PC-3 (cell line): ENCODE measurements at regions of chr3 and their contacts with region 1.

Region 1: GRCh38 chr3:80190051-80190450 is 422.3 kb upstream of the ROBO1 start:
- DNase-seq: peak; percentile 99
- ATAC-seq: peak; percentile 67
- H3K4me3 ChIP-seq: peak overlapping the region; percentile 28; the same call in 1 of the 2 replicates
- H3K27ac ChIP-seq: peak overlapping the region; percentile 75
- H3K4me1 ChIP-seq: peaks cover 59% of the 10 kb centered on the region
- H3K27me3 ChIP-seq: no peaks in the 10 kb centered on the region
- CTCF ChIP-seq: no peak

Region 2: GRCh38 chr3:79521238-79521848 is 668.7 kb before region 1 on chr3:
- CTCF ChIA-PET with region 1: no interaction called
- POLR2A ChIA-PET with region 1: no interaction called
- intact Hi-C with region 1: loop called (anchors 5 kb)
- DNase-seq: peak; percentile 84
- ATAC-seq: peak; percentile 72
- H3K4me3 ChIP-seq: peak overlapping the region; percentile 33; the same call in 1 of the 2 replicates
- H3K27ac ChIP-seq: no peak overlapping the region
- H3K4me1 ChIP-seq: no peaks in the 10 kb centered on the region; the same call in 1 of the 2 replicates
- H3K27me3 ChIP-seq: no peaks in the 10 kb centered on the region
- CTCF ChIP-seq: peak; percentile 83

Region 3: GRCh38 chr3:79810581-79810980 is 379.5 kb before region 1 on chr3:
- CTCF ChIA-PET with region 1: no interaction called
- POLR2A ChIA-PET with region 1: no interaction called
- intact Hi-C with region 1: loop called (anchors 5 kb)
- DNase-seq: peak; percentile 70
- ATAC-seq: peak; percentile 80
- H3K4me3 ChIP-seq: no peak overlapping the region
- H3K27ac ChIP-seq: 0 out of 2 replicates have a peak overlapping the region, but pooled peaks have one; percentile 3
- H3K4me1 ChIP-seq: peaks cover 27% of the 10 kb centered on the region
- H3K27me3 ChIP-seq: no peaks in the 10 kb centered on the region
- CTCF ChIP-seq: no peak

Region 4: GRCh38 chr3:79986338-79986737 is 203.7 kb before region 1 on chr3:
- CTCF ChIA-PET with region 1: no interaction called
- POLR2A ChIA-PET with region 1: interaction called, 3 read pairs
- intact Hi-C with region 1: loop called (anchors 5 kb)
- DNase-seq: no peak
- ATAC-seq: peak; percentile 65; the same call in 1 of the 2 replicates
- H3K4me3 ChIP-seq: no peak overlapping the region
- H3K27ac ChIP-seq: peak overlapping the region; percentile 93
- H3K4me1 ChIP-seq: peaks cover 23% of the 10 kb centered on the region
- H3K27me3 ChIP-seq: no peaks in the 10 kb centered on the region
- CTCF ChIP-seq: no peak

Region 5: DNA sequence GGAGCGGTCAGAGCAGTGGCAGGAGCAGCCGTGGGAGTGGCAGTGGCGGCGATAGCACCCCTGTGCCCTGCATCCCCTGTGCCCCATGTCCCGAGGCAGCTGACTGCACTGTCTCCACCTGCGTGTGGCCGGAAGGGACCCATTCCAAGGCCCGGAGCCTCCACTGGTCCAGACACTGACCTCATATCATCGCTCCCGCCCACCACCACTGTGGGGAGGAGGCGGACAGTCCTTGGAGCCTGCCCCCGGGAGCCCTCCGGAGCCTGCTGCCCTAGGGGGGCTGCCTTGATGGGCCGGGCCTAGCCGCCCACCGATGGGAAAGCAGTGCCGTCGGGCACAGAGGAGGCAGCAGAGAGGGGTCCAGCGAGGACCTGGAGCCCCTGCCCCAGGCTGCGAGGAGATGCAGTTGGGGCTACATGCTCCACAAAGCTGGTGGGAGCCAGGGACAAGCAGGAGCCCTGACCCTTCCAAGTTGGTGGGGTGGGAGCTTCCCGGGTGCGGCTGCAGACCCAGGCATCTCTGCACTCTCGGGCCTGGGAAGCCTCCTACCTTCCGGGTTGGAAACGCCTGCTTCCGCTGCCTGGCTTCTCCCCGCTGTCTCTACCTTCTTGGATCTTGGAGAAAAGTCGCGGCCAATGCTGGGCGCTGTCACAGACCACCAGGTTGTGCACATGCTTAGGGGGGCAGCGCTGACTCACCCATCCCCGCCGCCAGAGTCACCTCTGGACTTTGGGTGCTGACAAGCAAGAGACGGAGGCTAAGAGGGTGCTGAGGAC is 139.0 kb before region 1 on chr3:
- CTCF ChIA-PET with region 1: no interaction called
- POLR2A ChIA-PET with region 1: no interaction called
- intact Hi-C with region 1: no loop called
- DNase-seq: no peak
- ATAC-seq: no peak
- H3K4me3 ChIP-seq: no peak overlapping the region
- H3K27ac ChIP-seq: no peak overlapping the region
- H3K4me1 ChIP-seq: no peaks in the 10 kb centered on the region
- H3K27me3 ChIP-seq: no peaks in the 10 kb centered on the region
- CTCF ChIP-seq: no peak

Region 6: GRCh38 chr3:80097674-80098073 is 92.4 kb before region 1 on chr3:
- CTCF ChIA-PET with region 1: no interaction called
- POLR2A ChIA-PET with region 1: no interaction called
- intact Hi-C with region 1: loop called (anchors 5 kb)
- DNase-seq: peak; percentile 84
- ATAC-seq: peak; percentile 99
- H3K4me3 ChIP-seq: no peak overlapping the region
- H3K27ac ChIP-seq: peak overlapping the region; percentile 24
- H3K4me1 ChIP-seq: peaks cover 31% of the 10 kb centered on the region
- H3K27me3 ChIP-seq: no peaks in the 10 kb centered on the region
- CTCF ChIP-seq: no peak

Region 7: DNA sequence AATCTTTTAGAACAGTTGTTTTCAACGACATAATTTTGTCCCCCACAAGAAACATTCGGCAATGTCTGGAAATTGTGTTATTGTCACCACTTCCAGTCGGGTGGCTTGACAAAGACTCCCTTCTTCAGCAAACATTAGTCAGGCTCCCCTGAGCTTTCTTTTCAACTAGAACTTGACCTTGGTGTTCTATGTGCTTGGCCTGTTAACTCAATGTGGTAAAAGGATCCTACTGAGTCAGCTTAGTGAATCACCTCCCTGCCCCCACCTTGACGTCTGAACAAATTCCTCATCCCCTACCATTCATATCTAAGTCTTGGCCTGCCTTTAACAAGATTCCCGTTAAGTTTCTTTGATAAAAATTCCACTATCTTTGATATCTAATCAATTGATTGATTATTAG is 42.7 kb after region 1 on chr3:
- CTCF ChIA-PET with region 1: no interaction called
- POLR2A ChIA-PET with region 1: no interaction called
- intact Hi-C with region 1: loop called (anchors 1 kb)
- DNase-seq: peak; percentile 95
- ATAC-seq: peak; percentile 96
- H3K4me3 ChIP-seq: peak overlapping the region; percentile 58
- H3K27ac ChIP-seq: peak overlapping the region; percentile 84
- H3K4me1 ChIP-seq: peaks cover 30% of the 10 kb centered on the region
- H3K27me3 ChIP-seq: no peaks in the 10 kb centered on the region
- CTCF ChIP-seq: no peak

Region 8: GRCh38 chr3:80521074-80521473 is 331.0 kb after region 1 on chr3:
- CTCF ChIA-PET with region 1: no interaction called
- POLR2A ChIA-PET with region 1: no interaction called
- intact Hi-C with region 1: loop called (anchors 1 kb)
- DNase-seq: peak; percentile 65
- ATAC-seq: peak; percentile 85
- H3K4me3 ChIP-seq: no peak overlapping the region
- H3K27ac ChIP-seq: no peak overlapping the region
- H3K4me1 ChIP-seq: peaks cover 16% of the 10 kb centered on the region
- H3K27me3 ChIP-seq: no peaks in the 10 kb centered on the region
- CTCF ChIP-seq: no peak